ENCODE measurements at regions of chr5 and their contacts with region 1.

Region 1: GRCh38 chr5:40688127-40688761 is 8.5 kb downstream of the PTGER4 start:
- DNase-seq: peak; percentile 70 to 96 (median 84)
- ATAC-seq: peak; percentile 71 to 81 (median 74)
- H3K4me3 ChIP-seq: peak overlapping the region; percentile 3 to 28
- H3K4me3 Mint-ChIP-seq: peak overlapping the region; percentile 81 to 100 (median 92)
- H3K27ac ChIP-seq: peak overlapping the region; percentile 59
- H3K27ac Mint-ChIP-seq: peak overlapping the region; percentile 92 to 94
- H3K4me1 ChIP-seq: peaks cover 42 to 43% of the 10 kb centered on the region in 2 experiments
- H3K4me1 Mint-ChIP-seq: peaks cover 82 to 89% (median 85%) of the 10 kb centered on the region in 3 donors
- H3K27me3 ChIP-seq: no peaks in the 10 kb centered on the region
- H3K27me3 Mint-ChIP-seq: no peaks in the 10 kb centered on the region

Region 2: DNA sequence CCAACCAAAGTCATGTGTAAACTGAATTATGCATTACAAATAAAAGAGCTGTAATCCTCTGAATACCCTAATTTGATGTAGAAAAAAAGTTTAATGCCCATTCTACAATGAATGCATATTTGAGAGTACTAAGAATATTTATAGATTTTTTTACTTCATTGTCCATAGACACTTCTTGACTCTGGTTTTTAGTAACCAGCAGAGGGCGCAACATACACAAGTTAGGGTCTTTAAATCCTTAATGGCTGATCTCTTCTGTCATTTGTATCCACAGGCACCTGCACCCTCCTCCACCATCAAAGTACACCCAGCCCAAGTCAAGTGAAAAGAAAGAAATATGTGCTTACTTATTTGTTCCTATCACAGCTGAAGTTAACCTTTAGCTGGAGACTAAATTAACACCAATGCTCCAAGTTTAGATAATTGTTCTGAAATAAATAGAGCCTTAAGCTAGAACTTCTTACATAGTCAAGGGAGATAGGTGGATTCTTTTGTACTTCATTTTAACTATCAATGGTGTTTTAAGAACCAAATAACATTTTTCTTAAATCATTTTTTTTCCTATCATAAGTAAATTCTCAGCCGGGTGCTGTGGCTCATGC is 739.3 kb before region 1 on chr5:
- CTCF ChIA-PET with region 1: interaction called, 4 to 14 read pairs
- POLR2A ChIA-PET with region 1: interaction called in 1 of 2 experiments, 3 read pairs
- DNase-seq: peak in 32 of 35 experiments; percentile 11 to 85 (median 47)
- ATAC-seq: peak; percentile 76 to 87 (median 80)
- H3K4me3 ChIP-seq: no peak overlapping the region
- H3K4me3 Mint-ChIP-seq: no peak overlapping the region
- H3K27ac ChIP-seq: no peak overlapping the region
- H3K27ac Mint-ChIP-seq: no peak overlapping the region
- H3K4me1 ChIP-seq: no peaks in the 10 kb centered on the region
- H3K4me1 Mint-ChIP-seq: peaks cover 0 to 3% (median 2%) of the 10 kb centered on the region in 3 donors
- H3K27me3 ChIP-seq: no peaks in the 10 kb centered on the region
- H3K27me3 Mint-ChIP-seq: no peaks in the 10 kb centered on the region

Region 3: GRCh38 chr5:40720069-40720468 is 31.8 kb after region 1 on chr5:
- CTCF ChIA-PET with region 1: no interaction called
- POLR2A ChIA-PET with region 1: interaction called in 1 of 2 experiments, 10 read pairs
- DNase-seq: no peak
- ATAC-seq: no peak
- H3K4me3 ChIP-seq: no peak overlapping the region
- H3K4me3 Mint-ChIP-seq: no peak overlapping the region
- H3K27ac ChIP-seq: no peak overlapping the region
- H3K27ac Mint-ChIP-seq: no peak overlapping the region
- H3K4me1 ChIP-seq: no peaks in the 10 kb centered on the region
- H3K4me1 Mint-ChIP-seq: peaks cover 5 to 12% (median 6%) of the 10 kb centered on the region in 3 donors
- H3K27me3 ChIP-seq: no peaks in the 10 kb centered on the region
- H3K27me3 Mint-ChIP-seq: no peaks in the 10 kb centered on the region

Measured in T-cell (primary cell).